Naive thymus-derived CD4-positive, alpha-beta T cell (primary cell): ENCODE measurements at regions of chr20 and their contacts with region 1.

Region 1: GRCh38 chr20:58388882-58389323 is at the start of gene VAPB:
- DNase-seq: peak; percentile 94 to 99 (median 98)
- ATAC-seq: peak; percentile 98
- H3K4me3 ChIP-seq: peak within 1 kb of the TSS; percentile 77
- H3K4me3 Mint-ChIP-seq: peak within 1 kb of the TSS; percentile 82 to 100 (median 96)
- H3K27ac ChIP-seq: peak within 1 kb of the TSS; percentile 100
- H3K27ac Mint-ChIP-seq: peak within 1 kb of the TSS; percentile 84 to 99 (median 97)
- H3K4me1 ChIP-seq: peaks cover 13 to 28% of the 10 kb centered on the region in 2 donors
- H3K4me1 Mint-ChIP-seq: peaks cover 29 to 44% (median 42%) of the 10 kb centered on the region in 7 donors
- H3K27me3 ChIP-seq: no peaks in the 10 kb centered on the region
- H3K27me3 Mint-ChIP-seq: peaks cover 0 to 11% (median 0%) of the 10 kb centered on the region in 5 donors
- total RNA-seq, gene VAPB: 23.0 to 37.0 (median 27.6) TPM

Region 2: GRCh38 chr20:56468316-56469082 is 1920.4 kb before region 1 on chr20 and contains the start of gene RTF2:
- CTCF ChIA-PET with region 1: no interaction called
- POLR2A ChIA-PET with region 1: no interaction called
- intact Hi-C with region 1: loop called in 1 of 2 experiments (anchors 1 kb)
- DNase-seq: peak; percentile 93 to 99 (median 96)
- ATAC-seq: peak; percentile 99
- H3K4me3 ChIP-seq: peak within 1 kb of the TSS; percentile 74
- H3K4me3 Mint-ChIP-seq: peak within 1 kb of the TSS; percentile 94 to 100 (median 100)
- H3K27ac ChIP-seq: peak within 1 kb of the TSS; percentile 88
- H3K27ac Mint-ChIP-seq: peak within 1 kb of the TSS; percentile 95 to 100 (median 99)
- H3K4me1 ChIP-seq: peaks cover 27 to 31% of the 10 kb centered on the region in 2 donors
- H3K4me1 Mint-ChIP-seq: peaks cover 27 to 53% (median 48%) of the 10 kb centered on the region in 7 donors
- H3K27me3 ChIP-seq: no peaks in the 10 kb centered on the region
- H3K27me3 Mint-ChIP-seq: no peaks in the 10 kb centered on the region
- total RNA-seq, gene RTF2: 62.5 to 118 (median 72.0) TPM

Region 3: GRCh38 chr20:58236612-58237330 is 152.1 kb before region 1 on chr20:
- CTCF ChIA-PET with region 1: interaction called, 3 read pairs
- POLR2A ChIA-PET with region 1: no interaction called
- intact Hi-C with region 1: loop called (anchors 1 kb)
- DNase-seq: peak; percentile 62 to 90 (median 80)
- ATAC-seq: peak; percentile 96
- H3K4me3 ChIP-seq: peak overlapping the region; percentile 65
- H3K4me3 Mint-ChIP-seq: peak overlapping the region; percentile 77 to 94 (median 92)
- H3K27ac ChIP-seq: peak overlapping the region; percentile 76
- H3K27ac Mint-ChIP-seq: peak overlapping the region; percentile 71 to 96 (median 91)
- H3K4me1 ChIP-seq: no peaks in the 10 kb centered on the region
- H3K4me1 Mint-ChIP-seq: peaks cover 2 to 25% (median 17%) of the 10 kb centered on the region in 7 donors
- H3K27me3 ChIP-seq: no peaks in the 10 kb centered on the region
- H3K27me3 Mint-ChIP-seq: no peaks in the 10 kb centered on the region

Region 4: GRCh38 chr20:58692594-58693226 is 303.8 kb after region 1 on chr20 and contains the start of gene NPEPL1:
- CTCF ChIA-PET with region 1: no interaction called
- POLR2A ChIA-PET with region 1: interaction called, 6 read pairs
- intact Hi-C with region 1: loop called in 1 of 2 experiments (anchors 1 kb)
- DNase-seq: peak; percentile 37 to 85 (median 55)
- ATAC-seq: peak; percentile 93
- H3K4me3 ChIP-seq: peak within 1 kb of the TSS; percentile 19
- H3K4me3 Mint-ChIP-seq: peak within 1 kb of the TSS; percentile 58 to 89 (median 81)
- H3K27ac ChIP-seq: peak within 1 kb of the TSS; percentile 68
- H3K27ac Mint-ChIP-seq: peak within 1 kb of the TSS; percentile 63 to 87 (median 80)
- H3K4me1 ChIP-seq: peaks cover 4 to 7% of the 10 kb centered on the region in 2 donors
- H3K4me1 Mint-ChIP-seq: peaks cover 4 to 19% (median 10%) of the 10 kb centered on the region in 7 donors
- H3K27me3 ChIP-seq: no peaks in the 10 kb centered on the region
- H3K27me3 Mint-ChIP-seq: no peaks in the 10 kb centered on the region
- total RNA-seq, gene NPEPL1: 32.8 to 76.2 (median 50.5) TPM

Region 5: DNA sequence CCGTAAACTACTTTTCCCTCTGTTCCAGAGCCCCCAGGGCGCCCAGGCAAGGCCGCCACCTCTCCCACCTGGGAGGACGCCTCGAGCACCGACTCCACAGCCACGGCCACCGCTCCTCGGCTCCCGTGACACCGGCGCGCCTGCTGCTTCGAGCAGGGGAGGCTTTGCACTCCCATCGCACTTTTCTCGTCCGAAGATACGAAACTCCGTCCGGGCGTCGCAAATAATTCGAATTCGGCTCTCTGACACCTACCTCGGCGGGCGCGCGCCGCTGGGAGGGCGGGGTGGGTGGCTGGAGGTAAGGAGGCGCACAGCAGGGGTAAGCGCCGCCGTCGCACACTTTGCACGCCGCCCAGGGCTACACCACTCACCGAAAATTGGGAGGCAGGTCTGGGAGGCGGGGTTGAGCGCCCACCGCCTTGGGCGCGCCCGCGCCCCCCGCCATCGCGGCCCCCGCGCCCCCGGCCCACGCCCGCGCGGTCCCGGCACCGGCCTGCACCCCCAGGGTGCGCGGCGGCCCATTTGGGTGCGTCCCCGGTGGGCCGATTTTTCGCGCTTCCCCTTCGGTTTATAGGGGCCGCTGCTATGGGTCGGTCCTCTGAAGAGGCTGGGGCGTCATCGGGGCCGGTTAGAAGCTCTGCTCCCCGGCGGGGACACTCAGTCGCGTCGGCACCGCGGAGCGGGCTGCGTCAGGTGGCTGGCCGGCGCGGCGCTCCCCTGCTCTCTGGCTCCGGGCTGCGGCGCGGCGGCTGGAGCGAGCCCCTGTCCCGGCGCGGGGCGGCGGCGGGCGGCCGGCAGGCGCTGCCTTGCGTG is 499.8 kb after region 1 on chr20:
- CTCF ChIA-PET with region 1: no interaction called
- POLR2A ChIA-PET with region 1: interaction called, 3 read pairs
- intact Hi-C with region 1: loop called (anchors 1 to 5 kb)
- DNase-seq: peak; percentile 64 to 91 (median 86)
- ATAC-seq: peak; percentile 76
- H3K4me3 ChIP-seq: peak overlapping the region; percentile 68
- H3K4me3 Mint-ChIP-seq: peak overlapping the region; percentile 81 to 94 (median 87)
- H3K27ac ChIP-seq: peak overlapping the region; percentile 95
- H3K27ac Mint-ChIP-seq: peak overlapping the region; percentile 67 to 97 (median 90)
- H3K4me1 ChIP-seq: peaks cover 4 to 6% of the 10 kb centered on the region in 2 donors
- H3K4me1 Mint-ChIP-seq: peaks cover 15 to 46% (median 37%) of the 10 kb centered on the region in 7 donors
- H3K27me3 ChIP-seq: no peaks in the 10 kb centered on the region
- H3K27me3 Mint-ChIP-seq: peaks cover 0 to 3% (median 0%) of the 10 kb centered on the region in 5 donors

Region 6: DNA sequence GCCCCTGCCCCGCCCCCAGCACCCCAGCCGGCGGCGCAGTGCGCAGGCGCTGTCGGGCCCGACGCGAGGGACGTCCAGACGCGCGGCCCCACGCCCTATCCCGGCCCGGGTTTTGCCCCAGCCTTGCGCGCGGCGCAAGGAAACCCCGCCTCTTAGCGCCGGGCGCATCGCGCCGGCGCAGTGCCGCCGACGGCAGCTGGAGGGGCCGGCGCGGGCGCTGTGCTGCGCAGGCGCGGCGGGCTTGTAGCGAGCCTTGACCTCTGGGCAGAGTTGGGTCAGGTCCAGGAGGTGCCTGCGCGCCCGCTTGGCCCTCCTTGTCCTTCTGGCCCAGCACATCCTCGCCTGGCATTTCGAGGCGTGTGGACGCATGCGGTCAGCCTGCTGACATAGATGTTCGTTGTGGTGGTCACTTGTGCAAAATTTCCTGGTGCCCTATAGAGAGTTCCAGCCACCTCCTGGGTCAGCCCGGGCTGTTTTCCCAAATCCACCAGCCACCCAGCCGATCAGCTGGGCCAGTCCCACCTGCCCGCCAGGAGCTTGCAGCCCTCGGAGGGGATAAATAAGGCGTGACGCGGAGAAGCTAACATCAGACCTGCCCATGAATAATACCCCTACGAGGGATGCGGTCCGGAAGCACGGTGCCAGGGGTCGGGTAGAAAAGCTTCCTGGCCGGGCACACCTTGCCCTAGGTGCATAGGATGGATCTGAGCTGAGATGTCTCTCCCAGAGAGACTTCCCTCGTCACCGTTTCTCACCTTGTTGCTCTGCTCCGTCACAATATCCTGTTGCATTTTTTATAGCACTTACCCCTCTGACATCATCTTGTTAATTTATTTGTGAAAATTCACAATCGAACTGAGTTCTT is 654.1 kb after region 1 on chr20:
- CTCF ChIA-PET with region 1: no interaction called
- POLR2A ChIA-PET with region 1: no interaction called
- intact Hi-C with region 1: loop called in 1 of 2 experiments (anchors 1 kb)
- DNase-seq: peak; percentile 90 to 98 (median 94)
- ATAC-seq: peak; percentile 98
- H3K4me3 ChIP-seq: peak overlapping the region; percentile 76
- H3K4me3 Mint-ChIP-seq: peak overlapping the region; percentile 81 to 96 (median 90)
- H3K27ac ChIP-seq: peak overlapping the region; percentile 93
- H3K27ac Mint-ChIP-seq: peak overlapping the region; percentile 76 to 96 (median 91)
- H3K4me1 ChIP-seq: peaks cover 30 to 32% of the 10 kb centered on the region in 2 donors
- H3K4me1 Mint-ChIP-seq: peaks cover 35 to 54% (median 50%) of the 10 kb centered on the region in 7 donors
- H3K27me3 ChIP-seq: no peaks in the 10 kb centered on the region
- H3K27me3 Mint-ChIP-seq: no peaks in the 10 kb centered on the region

Region 7: DNA sequence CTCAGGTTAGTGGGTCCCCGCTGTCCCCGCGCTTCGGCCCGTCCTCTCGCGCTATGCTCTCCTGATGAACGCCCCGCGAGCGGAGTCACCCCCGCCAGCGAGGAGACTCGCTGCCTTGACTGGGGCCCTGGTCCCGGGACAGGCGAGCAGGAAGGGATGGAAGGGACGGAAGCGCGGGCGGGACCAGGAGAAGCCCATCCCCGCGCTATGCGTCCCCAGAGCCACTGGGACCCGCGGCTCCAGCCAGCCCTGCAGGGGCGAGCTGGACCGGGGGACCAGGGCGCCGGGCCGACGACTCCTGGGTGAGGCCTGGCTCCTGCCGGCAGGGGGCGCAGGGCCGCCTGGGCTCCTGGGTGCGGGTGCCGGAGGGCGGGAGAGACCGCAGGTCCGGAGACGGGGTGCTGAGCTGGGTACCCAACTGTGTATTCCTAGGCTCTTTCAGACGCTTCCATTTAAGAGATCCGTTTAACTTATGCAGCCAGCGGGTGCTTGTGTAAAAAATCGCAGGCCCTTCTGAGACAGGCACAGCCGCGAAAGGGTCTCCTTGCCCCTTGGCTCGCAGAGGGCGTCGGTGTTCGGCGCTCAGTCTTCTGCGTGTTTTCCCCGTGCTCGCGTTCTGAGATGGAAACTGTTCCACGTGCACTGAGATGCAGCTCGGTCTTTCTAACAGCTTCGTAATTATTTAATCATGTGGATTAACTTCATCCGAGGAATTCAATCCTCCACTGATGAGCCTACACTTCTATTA is 1545.1 kb after region 1 on chr20:
- CTCF ChIA-PET with region 1: no interaction called
- POLR2A ChIA-PET with region 1: no interaction called
- intact Hi-C with region 1: loop called in 1 of 2 experiments (anchors 5 kb)
- DNase-seq: peak; percentile 64 to 88 (median 73)
- ATAC-seq: peak; percentile 87
- H3K4me3 ChIP-seq: peak overlapping the region; percentile 74
- H3K4me3 Mint-ChIP-seq: peak overlapping the region; percentile 71 to 88 (median 80)
- H3K27ac ChIP-seq: peak overlapping the region; percentile 61
- H3K27ac Mint-ChIP-seq: peak overlapping the region in 5 of 9 donors; percentile 17 to 81 (median 59)
- H3K4me1 ChIP-seq: peaks cover 8 to 9% of the 10 kb centered on the region in 2 donors
- H3K4me1 Mint-ChIP-seq: peaks cover 9 to 52% (median 39%) of the 10 kb centered on the region in 7 donors
- H3K27me3 ChIP-seq: no peaks in the 10 kb centered on the region
- H3K27me3 Mint-ChIP-seq: no peaks in the 10 kb centered on the region